Activated CD8-positive, alpha-beta T cell treated with anti-CD3 and anti-CD28 coated beads, Interleukin-2, amount 10 ng/mL, durations not matched to agents 7 days and 5 days (primary cell): ENCODE measurements at regions of chr2 and their contacts with region 1.

Region 1: DNA sequence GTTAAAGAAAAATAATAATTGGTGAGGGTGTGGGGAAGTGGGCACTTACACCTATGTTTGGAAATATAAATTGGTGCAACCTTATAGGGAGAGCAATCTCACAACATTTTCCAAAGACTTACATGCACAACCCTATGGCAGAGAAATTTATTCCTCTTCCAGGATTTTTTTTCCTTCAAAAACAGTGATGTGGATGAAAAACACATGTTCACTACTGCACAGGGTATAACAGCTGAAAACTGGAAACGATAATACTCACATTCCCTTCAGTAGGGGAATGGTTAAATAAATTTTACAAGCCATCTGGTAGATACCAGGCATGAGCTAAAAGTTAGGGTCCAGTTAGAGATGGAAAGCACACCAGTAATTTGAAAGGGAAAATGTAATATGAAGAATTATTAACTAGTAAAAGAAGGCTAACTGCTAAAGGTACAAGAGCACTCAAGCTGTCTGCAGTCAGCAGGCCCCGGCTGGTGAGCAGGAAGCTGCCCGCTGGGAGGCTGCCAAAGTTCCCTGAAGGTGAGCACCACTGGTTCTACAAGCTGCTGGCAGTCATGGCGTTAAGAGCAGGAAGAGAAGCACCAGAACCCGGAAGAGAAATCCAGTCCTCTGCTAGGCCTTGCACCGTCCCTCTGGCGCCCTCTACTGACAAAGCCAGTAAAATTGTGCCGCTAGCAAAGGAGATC is 28.4 kb upstream of the CASP8 start:
- DNase-seq: peak; percentile 96
- ATAC-seq: peak; percentile 55
- H3K4me3 Mint-ChIP-seq: peak overlapping the region; percentile 98
- H3K27ac Mint-ChIP-seq: peak overlapping the region; percentile 89
- H3K4me1 Mint-ChIP-seq: peaks cover 53% of the 10 kb centered on the region
- H3K27me3 Mint-ChIP-seq: no peaks in the 10 kb centered on the region

Region 2: DNA sequence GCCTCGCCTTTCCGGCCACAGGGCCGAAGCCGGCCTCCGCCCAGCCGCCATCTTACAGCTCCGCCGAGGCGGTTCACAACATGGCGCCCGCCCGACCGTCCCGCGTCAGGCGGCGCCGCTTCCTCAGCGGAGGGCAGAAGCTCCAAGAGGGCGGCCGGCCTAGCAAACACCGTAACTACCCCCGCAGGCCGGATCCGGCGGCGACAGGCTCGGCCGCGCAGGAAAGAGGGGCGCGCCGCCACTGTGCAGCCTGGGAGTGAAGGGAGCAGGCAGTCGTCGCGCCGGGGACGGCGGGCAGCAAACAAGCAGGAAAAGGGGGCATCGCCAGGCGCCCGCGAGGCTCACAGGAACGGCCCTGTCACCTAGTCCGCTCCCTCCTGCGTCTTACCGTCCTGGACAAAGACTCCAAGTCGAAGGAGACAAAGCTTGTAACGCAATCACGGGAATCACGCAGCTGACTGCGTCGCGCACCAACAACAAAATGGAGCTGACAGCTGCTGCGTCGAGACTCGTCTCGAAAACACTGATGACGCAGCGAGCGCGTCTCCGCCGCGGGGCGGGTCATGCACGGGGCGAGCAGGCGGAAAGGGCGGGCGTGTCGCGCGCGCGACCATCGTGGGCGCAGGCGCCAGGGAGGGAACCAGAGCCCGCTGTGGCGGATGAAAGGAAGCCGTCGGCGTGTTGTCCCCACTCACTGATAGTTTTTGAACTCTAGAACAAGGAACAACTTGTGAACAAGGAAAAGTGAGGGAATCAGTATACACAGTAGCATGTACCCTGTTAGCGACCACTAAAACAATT is 367.5 kb before region 1 on chr2 and contains the start of gene CLK1:
- CTCF ChIA-PET with region 1: interaction called, 9 read pairs
- POLR2A ChIA-PET with region 1: interaction called, 11 read pairs
- DNase-seq: peak; percentile 97
- ATAC-seq: peak; percentile 82
- H3K4me3 Mint-ChIP-seq: peak within 1 kb of the TSS; percentile 95
- H3K27ac Mint-ChIP-seq: peak within 1 kb of the TSS; percentile 100
- H3K4me1 Mint-ChIP-seq: peaks cover 43% of the 10 kb centered on the region
- H3K27me3 Mint-ChIP-seq: no peaks in the 10 kb centered on the region
- total RNA-seq, gene CLK1: 122 to 126 TPM

Region 3: GRCh38 chr2:201071479-201072200 is 160.3 kb before region 1 on chr2 and contains the starts of genes HYCC2 and NDUFB3:
- CTCF ChIA-PET with region 1: interaction called, 42 read pairs
- POLR2A ChIA-PET with region 1: interaction called, 8 read pairs
- DNase-seq: peak; percentile 96
- ATAC-seq: peak; percentile 97
- H3K4me3 Mint-ChIP-seq: peak within 1 kb of the TSS; percentile 89
- H3K27ac Mint-ChIP-seq: peak within 1 kb of the TSS; percentile 88
- H3K4me1 Mint-ChIP-seq: peaks cover 46% of the 10 kb centered on the region
- H3K27me3 Mint-ChIP-seq: no peaks in the 10 kb centered on the region
- total RNA-seq, gene HYCC2: 35.9 to 40.2 TPM
- total RNA-seq, gene NDUFB3: 167 to 173 TPM

Region 4: DNA sequence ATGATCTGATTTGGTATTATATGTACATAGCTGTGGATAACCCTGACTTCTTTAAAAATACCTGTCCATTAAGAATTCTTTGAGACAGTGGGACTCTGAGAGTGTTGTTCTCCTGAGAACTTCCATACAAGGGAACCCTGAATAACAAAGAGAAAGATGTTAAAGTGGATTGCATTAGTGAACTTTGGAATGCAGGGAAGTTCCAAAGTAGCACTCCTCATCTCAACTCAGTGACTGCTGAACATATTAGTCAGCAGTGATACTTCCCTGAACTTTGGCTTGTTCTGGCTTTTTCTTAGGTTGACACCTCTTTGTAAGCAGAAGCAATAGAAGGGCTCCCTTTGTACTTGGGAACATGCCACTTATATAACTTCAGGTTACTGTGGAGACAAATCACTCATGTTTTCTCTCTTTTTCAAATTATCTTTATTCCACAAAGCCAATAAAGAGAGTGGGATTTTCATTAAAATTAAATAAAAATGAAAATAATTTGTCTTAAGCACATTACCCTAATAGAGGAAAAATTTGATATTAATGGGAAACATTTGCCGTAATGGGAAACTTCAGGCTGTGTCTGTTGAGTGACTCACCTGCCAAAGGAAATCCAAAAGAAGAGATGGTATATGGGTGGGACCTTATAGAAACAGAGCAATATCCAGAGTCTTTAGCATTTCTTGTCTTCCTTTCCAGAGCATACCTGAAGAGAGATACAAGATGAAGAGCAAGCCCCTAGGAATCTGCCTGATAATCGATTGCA is 82.7 kb before region 1 on chr2:
- CTCF ChIA-PET with region 1: interaction called, 12 read pairs
- POLR2A ChIA-PET with region 1: no interaction called
- DNase-seq: no peak
- ATAC-seq: no peak
- H3K4me3 Mint-ChIP-seq: no peak overlapping the region
- H3K27ac Mint-ChIP-seq: peak overlapping the region; percentile 7
- H3K4me1 Mint-ChIP-seq: peaks cover 20% of the 10 kb centered on the region
- H3K27me3 Mint-ChIP-seq: no peaks in the 10 kb centered on the region

Region 5: GRCh38 chr2:201194097-201194496 is 37.8 kb before region 1 on chr2:
- CTCF ChIA-PET with region 1: interaction called, 233 read pairs
- POLR2A ChIA-PET with region 1: interaction called, 9 read pairs
- DNase-seq: no peak
- ATAC-seq: peak; percentile 82
- H3K4me3 Mint-ChIP-seq: peak overlapping the region; percentile 63
- H3K27ac Mint-ChIP-seq: peak overlapping the region; percentile 84
- H3K4me1 Mint-ChIP-seq: peaks cover 75% of the 10 kb centered on the region
- H3K27me3 Mint-ChIP-seq: no peaks in the 10 kb centered on the region

Region 6: GRCh38 chr2:201257956-201258665 is 26.2 kb after region 1 on chr2:
- CTCF ChIA-PET with region 1: interaction called, 100 read pairs
- POLR2A ChIA-PET with region 1: interaction called, 221 read pairs
- DNase-seq: peak; percentile 98
- ATAC-seq: peak; percentile 71
- H3K4me3 Mint-ChIP-seq: peak overlapping the region; percentile 81
- H3K27ac Mint-ChIP-seq: peak overlapping the region; percentile 94
- H3K4me1 Mint-ChIP-seq: peaks cover 74% of the 10 kb centered on the region
- H3K27me3 Mint-ChIP-seq: no peaks in the 10 kb centered on the region

Region 7: DNA sequence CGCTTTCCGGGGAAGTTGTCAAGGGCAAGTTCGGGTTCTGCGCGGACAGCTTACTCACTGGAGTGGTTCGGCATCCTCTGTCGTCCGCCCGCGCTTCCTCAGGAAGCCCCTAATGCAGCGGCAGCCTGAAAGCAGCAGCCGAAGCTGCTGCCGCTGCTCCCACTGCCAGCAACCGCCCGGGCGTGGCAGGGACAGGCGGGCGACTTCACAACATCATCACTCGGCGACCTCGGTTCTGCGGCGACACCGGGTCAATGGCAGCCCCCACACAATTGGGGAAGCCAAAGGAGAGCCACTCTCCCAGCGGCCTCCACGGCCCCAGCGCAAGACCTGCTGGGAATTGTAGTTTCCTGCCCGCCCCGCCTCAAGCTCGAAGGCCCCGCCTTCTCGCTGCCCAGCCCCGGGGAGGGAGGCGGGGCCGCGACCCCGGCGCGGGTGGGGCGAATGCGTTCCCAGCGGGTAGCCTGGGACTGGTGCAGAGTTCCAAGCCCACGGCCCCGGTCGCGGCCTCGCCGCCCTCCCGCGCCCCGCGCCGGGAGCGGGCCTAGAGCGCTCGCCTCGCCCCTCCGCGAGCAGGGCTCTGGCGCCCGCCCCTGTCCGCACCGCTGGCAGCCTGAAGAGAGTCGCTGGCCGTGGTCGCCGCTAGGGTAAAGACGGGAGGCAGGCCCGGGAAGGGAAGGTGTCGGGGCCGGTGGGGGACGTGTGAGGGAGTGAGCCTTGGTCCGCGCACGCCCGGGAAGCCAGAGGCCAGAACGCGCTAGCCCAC is 219.6 kb after region 1 on chr2 and contains the starts of genes STRADB and TRAK2:
- CTCF ChIA-PET with region 1: interaction called, 8 read pairs
- POLR2A ChIA-PET with region 1: interaction called, 23 read pairs
- DNase-seq: peak; percentile 98
- ATAC-seq: peak; percentile 88
- H3K4me3 Mint-ChIP-seq: peak within 1 kb of the TSS; percentile 98
- H3K27ac Mint-ChIP-seq: peak within 1 kb of the TSS; percentile 98
- H3K4me1 Mint-ChIP-seq: peaks cover 62% of the 10 kb centered on the region
- H3K27me3 Mint-ChIP-seq: no peaks in the 10 kb centered on the region
- total RNA-seq, gene STRADB: 26.8 to 30.3 TPM
- total RNA-seq, gene TRAK2: 51.3 to 53.0 TPM